Calu3 (cell line): ENCODE measurements at regions of chr12 and their contacts with region 1.

Region 1: DNA sequence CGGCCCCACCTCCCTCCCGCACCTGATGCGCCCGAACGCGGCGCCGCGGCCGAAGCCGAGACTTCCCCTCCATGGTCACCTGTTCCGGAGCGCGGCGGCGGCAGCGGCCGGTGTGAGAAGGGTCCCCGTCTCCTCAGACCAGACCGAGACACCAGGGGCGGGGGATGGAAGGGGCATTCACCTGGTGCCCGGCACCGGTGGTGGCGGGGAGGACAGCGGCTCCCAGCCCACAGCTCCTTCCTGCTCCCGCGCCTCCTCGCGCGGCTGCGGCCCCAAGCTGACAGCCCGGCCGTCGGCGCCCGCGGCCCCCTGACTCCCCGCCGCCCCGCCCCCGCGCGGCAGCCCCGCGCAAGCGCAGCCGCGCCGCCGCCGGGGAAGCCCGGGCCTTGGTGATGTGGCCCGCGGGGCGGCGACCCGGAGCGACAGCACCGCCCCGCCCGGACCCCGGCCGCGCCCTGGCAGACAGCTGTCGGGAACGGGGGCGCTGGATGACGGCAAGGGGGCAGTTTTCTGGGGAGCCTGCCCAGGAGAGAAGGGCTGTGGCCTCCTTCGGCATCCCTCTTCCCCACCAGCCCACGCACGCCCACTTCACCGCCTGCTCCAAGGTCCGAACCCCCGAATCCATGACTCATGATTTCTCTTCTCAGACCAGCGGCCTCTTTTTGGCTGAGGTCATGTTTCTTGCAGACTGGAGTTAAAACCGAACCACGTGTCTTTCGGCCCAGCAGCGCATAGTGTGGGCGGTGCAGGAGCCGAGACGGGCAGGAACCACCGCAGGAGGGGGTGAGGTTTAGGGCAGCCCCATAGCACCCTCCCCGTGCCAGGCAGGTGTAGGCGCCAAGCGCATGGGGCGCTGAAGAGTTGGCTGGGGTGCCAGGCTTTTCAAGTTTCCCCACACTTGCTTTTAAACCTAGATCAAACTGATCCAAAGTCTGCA is at the start of gene SLC41A2:
- DNase-seq: peak; percentile 91
- H3K4me3 Mint-ChIP-seq: peak within 1 kb of the TSS; percentile 72
- H3K27ac Mint-ChIP-seq: peak within 1 kb of the TSS; percentile 81
- H3K4me1 Mint-ChIP-seq: peaks cover 40% of the 10 kb centered on the region
- H3K27me3 Mint-ChIP-seq: no peaks in the 10 kb centered on the region
- CTCF ChIP-seq: no peak
- total RNA-seq, gene SLC41A2: 41.5 and 48.1 TPM in 2 replicates

Region 2: GRCh38 chr12:104286538-104287482 is 671.5 kb before region 1 on chr12:
- CTCF ChIA-PET with region 1: no interaction called
- intact Hi-C with region 1: loop called (anchors 10 kb)
- DNase-seq: peak; percentile 94
- H3K4me3 Mint-ChIP-seq: peak overlapping the region; percentile 99
- H3K27ac Mint-ChIP-seq: peak overlapping the region; percentile 99
- H3K4me1 Mint-ChIP-seq: peaks cover 40% of the 10 kb centered on the region
- H3K27me3 Mint-ChIP-seq: no peaks in the 10 kb centered on the region
- CTCF ChIP-seq: no peak

Region 3: GRCh38 chr12:104671407-104672098 is 286.7 kb before region 1 on chr12:
- CTCF ChIA-PET with region 1: no interaction called
- intact Hi-C with region 1: loop called (anchors 10 kb)
- DNase-seq: peak; percentile 99
- H3K4me3 Mint-ChIP-seq: peak overlapping the region; percentile 48
- H3K27ac Mint-ChIP-seq: peak overlapping the region; percentile 90
- H3K4me1 Mint-ChIP-seq: peaks cover 52% of the 10 kb centered on the region
- H3K27me3 Mint-ChIP-seq: peaks cover 15% of the 10 kb centered on the region
- CTCF ChIP-seq: no peak

Region 4: DNA sequence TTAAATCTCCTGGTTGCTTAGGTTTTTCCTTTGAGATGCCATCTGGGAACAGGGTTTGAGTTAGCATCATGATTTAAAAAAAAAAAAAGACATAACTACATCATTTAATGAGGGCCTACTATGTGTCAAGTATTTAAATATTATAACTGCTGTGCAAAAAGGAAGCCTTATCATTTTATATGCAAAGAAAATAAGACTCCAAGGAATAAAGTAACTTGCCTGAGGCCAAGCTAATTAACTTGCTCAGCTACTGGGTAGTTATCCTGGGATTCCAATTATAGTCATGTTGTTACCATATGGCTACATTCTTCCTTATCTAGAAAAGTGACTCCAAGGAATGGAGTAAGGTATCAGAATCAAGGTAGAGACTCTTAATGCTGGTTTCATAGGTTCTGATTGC is 123.7 kb before region 1 on chr12:
- CTCF ChIA-PET with region 1: no interaction called
- intact Hi-C with region 1: no loop called
- DNase-seq: no peak
- H3K4me3 Mint-ChIP-seq: no peak overlapping the region
- H3K27ac Mint-ChIP-seq: no peak overlapping the region
- H3K4me1 Mint-ChIP-seq: no peaks in the 10 kb centered on the region
- H3K27me3 Mint-ChIP-seq: no peaks in the 10 kb centered on the region
- CTCF ChIP-seq: no peak

Region 5: DNA sequence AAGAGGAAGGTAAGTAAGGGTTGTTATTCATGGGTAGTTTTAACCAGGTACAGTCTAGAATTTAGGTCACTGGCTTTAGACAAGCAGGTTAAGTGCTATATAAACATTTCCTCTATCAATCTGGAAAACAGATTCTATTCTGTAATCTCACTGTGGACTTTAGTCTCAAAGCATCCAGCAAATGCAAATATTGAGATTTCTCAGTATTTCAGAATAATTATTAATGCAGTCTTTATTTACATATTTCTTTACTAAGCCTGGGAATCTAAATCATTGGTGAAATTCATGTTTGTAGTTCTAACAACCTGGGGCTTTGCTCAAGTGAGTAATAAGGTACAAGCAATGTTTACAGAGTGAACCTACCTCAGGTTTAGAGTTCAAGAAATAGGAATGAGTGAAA is 62.1 kb before region 1 on chr12:
- CTCF ChIA-PET with region 1: no interaction called
- intact Hi-C with region 1: loop called (anchors 5 kb)
- DNase-seq: no peak
- H3K4me3 Mint-ChIP-seq: peak overlapping the region; percentile 6
- H3K27ac Mint-ChIP-seq: peak overlapping the region; percentile 7
- H3K4me1 Mint-ChIP-seq: peaks cover 17% of the 10 kb centered on the region
- H3K27me3 Mint-ChIP-seq: no peaks in the 10 kb centered on the region
- CTCF ChIP-seq: no peak